Heart right ventricle (tissue), 16 donors: ENCODE measurements at regions of chr18 and their contacts with region 1.

Region 1: DNA sequence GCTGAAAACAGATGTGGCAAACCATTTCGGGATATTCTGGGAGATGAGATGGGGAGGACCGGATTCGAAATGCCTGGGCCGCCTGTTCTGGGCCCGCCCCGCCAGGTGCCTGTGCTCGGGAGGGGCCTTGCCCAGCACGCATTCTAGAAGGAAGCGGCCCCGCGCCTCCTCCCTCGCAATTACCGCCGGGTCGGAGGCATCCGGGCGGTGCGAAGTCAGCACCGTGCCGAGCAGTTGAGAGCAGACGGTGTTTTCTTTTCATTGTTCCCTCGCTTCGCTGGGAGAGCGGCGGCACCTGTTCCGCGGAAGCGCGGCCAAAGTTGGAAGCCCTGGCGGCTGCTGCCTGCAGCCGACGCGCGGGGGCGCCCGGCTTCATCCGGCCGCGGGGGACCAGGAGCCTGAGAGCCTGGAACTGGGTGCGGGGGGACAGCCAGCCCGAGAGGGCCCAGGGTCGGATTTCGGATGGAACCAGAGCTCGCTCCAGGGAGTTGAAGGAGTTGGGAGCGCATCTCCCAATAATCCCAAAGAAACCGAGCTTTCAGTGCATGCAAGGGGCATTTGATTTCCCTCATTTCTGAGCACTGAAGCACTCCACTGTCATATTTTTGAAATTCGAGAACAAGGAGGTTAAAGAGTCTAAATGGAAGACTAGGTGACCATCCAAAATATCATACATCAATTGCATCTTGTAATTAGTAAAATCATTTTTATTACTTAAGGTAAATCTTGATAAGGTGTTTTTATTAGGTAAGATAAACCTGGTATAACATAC is 241.8 kb upstream of the RAB12 start:
- DNase-seq: peak; percentile 11 to 38
- ATAC-seq: peak; percentile 34 to 70 (median 60)
- H3K4me3 ChIP-seq: peak overlapping the region in 9 of 10 donors; percentile 4 to 50 (median 44)
- H3K27ac ChIP-seq: no peak overlapping the region
- H3K4me1 ChIP-seq: peaks cover 0 to 36% (median 23%) of the 10 kb centered on the region in 9 donors
- H3K27me3 ChIP-seq: peaks cover 0 to 15% (median 0%) of the 10 kb centered on the region in 7 donors
- CTCF ChIP-seq: peak; percentile 25 to 73 (median 50)

Region 2: GRCh38 chr18:8162802-8163201 is 204.6 kb before region 1 on chr18:
- intact Hi-C with region 1: loop called in 1 of 10 experiments (anchors 10 kb)
- DNase-seq: peak in 1 of 2 donors; percentile 52
- ATAC-seq: peak in 5 of 8 donors; percentile 46 to 92 (median 81)
- H3K4me3 ChIP-seq: no peak overlapping the region
- H3K27ac ChIP-seq: no peak overlapping the region
- H3K4me1 ChIP-seq: peaks cover 0 to 38% (median 3%) of the 10 kb centered on the region in 9 donors
- H3K27me3 ChIP-seq: no peaks in the 10 kb centered on the region
- CTCF ChIP-seq: no peak

Region 3: GRCh38 chr18:8299054-8299980 is 68.1 kb before region 1 on chr18:
- intact Hi-C with region 1: loop called in 1 of 10 experiments (anchors 10 kb)
- DNase-seq: no peak
- ATAC-seq: no peak
- H3K4me3 ChIP-seq: no peak overlapping the region
- H3K27ac ChIP-seq: no peak overlapping the region
- H3K4me1 ChIP-seq: peaks cover 0 to 8% (median 0%) of the 10 kb centered on the region in 9 donors
- H3K27me3 ChIP-seq: no peaks in the 10 kb centered on the region
- CTCF ChIP-seq: no peak